Naive thymus-derived CD4-positive, alpha-beta T cell (primary cell): ENCODE measurements at regions of chr6 and their contacts with region 1.

Region 1: GRCh38 chr6:89829591-89830385 is at the start of gene CASP8AP2:
- DNase-seq: peak; percentile 71 to 98 (median 96)
- ATAC-seq: peak; percentile 97
- H3K4me3 ChIP-seq: peak within 1 kb of the TSS; percentile 96
- H3K4me3 Mint-ChIP-seq: peak within 1 kb of the TSS; percentile 92 to 100 (median 99)
- H3K27ac ChIP-seq: peak within 1 kb of the TSS; percentile 83
- H3K27ac Mint-ChIP-seq: peak within 1 kb of the TSS; percentile 84 to 97 (median 95)
- H3K4me1 ChIP-seq: peaks cover 11 to 14% of the 10 kb centered on the region in 2 donors
- H3K4me1 Mint-ChIP-seq: peaks cover 11 to 47% (median 33%) of the 10 kb centered on the region in 7 donors
- H3K27me3 ChIP-seq: no peaks in the 10 kb centered on the region
- H3K27me3 Mint-ChIP-seq: no peaks in the 10 kb centered on the region
- total RNA-seq, gene CASP8AP2: 21.2 to 44.8 (median 34.5) TPM

Region 2: DNA sequence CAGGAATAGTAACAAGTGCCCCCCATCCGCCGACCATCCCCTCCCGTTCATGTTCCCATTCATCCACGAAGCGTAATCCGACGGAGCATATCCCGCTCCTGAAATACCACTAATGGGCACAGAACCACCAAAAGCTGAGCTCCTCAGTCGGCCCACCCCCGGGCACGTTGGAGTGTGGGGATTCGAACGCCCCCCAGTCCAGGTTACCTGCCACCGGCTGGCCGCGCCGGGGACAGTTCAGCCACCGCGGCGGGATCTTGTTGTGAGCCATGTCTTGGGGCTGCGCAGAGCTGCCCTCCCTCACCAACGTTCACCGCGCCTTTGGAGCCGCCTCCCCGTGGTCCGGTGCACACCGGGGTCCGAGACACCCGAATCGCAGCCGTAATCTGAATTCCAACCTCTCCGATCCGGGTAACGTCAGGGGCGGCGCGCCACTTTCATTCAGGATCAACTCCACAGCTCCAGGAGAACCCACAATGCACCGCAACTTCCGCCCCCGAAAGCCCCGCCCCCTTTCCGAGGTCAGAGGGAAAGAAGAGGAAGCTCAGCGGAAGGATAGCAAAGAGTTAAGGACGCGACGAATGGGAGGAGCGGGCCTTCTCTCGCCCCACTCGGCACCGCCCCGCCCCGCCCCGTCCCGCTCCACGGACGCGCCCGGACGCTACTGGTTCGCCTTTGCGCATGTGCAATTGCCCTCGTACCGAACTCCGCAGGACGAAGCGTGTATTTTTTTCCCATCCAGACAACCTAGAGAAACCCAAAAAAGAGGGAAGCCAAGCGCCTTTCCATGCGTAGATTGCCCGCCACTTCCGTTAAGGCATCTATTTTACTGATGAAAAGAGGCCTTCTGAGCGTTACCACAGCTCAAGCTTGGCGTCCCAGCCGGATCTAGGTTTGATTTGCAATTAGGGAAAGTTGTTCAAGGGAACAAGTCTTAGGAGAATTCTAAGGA is 866.4 kb before region 1 on chr6 and contains the start of gene RNGTT:
- CTCF ChIA-PET with region 1: no interaction called
- POLR2A ChIA-PET with region 1: no interaction called
- intact Hi-C with region 1: loop called (anchors 1 kb)
- DNase-seq: peak; percentile 89 to 98 (median 95)
- ATAC-seq: peak; percentile 100
- H3K4me3 ChIP-seq: peak within 1 kb of the TSS; percentile 82
- H3K4me3 Mint-ChIP-seq: peak within 1 kb of the TSS; percentile 91 to 99 (median 98)
- H3K27ac ChIP-seq: peak within 1 kb of the TSS; percentile 82
- H3K27ac Mint-ChIP-seq: peak within 1 kb of the TSS; percentile 85 to 97 (median 94)
- H3K4me1 ChIP-seq: peaks cover 9 to 18% of the 10 kb centered on the region in 2 donors
- H3K4me1 Mint-ChIP-seq: peaks cover 25 to 57% (median 52%) of the 10 kb centered on the region in 7 donors
- H3K27me3 ChIP-seq: no peaks in the 10 kb centered on the region
- H3K27me3 Mint-ChIP-seq: peaks cover 0 to 2% (median 0%) of the 10 kb centered on the region in 5 donors
- total RNA-seq, gene RNGTT: 15.4 to 26.5 (median 20.8) TPM

Region 3: GRCh38 chr6:89371849-89372505 is 457.8 kb before region 1 on chr6:
- CTCF ChIA-PET with region 1: no interaction called
- POLR2A ChIA-PET with region 1: no interaction called
- intact Hi-C with region 1: loop called in 1 of 2 experiments (anchors 5 kb)
- DNase-seq: peak; percentile 55 to 79 (median 68)
- ATAC-seq: peak; percentile 85
- H3K4me3 ChIP-seq: no peak overlapping the region
- H3K4me3 Mint-ChIP-seq: peak overlapping the region in 3 of 10 donors; percentile 13 to 49 (median 29)
- H3K27ac ChIP-seq: no peak overlapping the region
- H3K27ac Mint-ChIP-seq: peak overlapping the region in 5 of 9 donors; percentile 39 to 87 (median 59)
- H3K4me1 ChIP-seq: peaks cover 6 to 8% of the 10 kb centered on the region in 2 donors
- H3K4me1 Mint-ChIP-seq: peaks cover 0 to 42% (median 9%) of the 10 kb centered on the region in 7 donors
- H3K27me3 ChIP-seq: no peaks in the 10 kb centered on the region
- H3K27me3 Mint-ChIP-seq: no peaks in the 10 kb centered on the region

Region 4: DNA sequence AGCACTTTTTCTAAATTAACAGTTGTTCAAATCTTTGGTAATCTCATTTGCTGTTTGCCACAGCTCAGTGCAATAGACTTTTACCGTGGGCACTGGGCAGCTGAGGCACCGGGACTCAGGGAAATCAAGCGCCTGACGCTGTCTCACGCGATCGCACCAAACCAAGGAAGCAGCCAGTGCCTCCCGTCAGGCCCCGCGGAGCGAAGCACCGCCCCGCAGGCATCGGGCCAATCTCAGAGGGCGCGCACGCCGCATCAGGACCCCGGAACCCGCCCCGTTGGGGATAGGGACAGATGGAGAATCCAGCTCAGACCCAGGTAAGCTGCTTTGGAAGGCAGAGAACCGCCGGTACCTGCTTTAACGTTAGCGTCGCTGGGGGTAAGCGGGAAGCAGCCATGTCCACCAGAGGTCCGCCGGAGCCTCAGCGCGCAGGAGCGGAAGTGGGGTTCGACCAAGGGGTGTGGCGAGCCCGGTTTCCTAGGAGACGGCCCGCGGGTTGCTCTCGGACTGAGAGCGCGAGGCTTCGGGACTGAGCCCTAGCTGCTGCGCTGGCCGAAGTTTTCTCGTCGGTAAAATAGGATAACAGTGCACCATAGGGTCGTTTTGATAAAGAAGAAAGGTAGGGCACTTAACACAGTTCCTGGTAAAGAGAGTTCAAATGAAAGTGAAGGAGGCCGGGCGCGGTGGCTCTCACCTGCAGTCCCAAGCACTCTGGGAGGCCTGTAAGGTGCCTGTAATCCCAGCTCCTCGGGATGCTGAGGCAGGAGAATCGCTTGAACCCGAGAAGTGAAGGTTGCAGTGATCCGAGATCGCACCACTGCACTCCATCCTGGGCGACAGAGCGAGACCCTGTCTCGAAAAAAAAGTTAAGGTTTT is 191.2 kb before region 1 on chr6 and contains the start of gene LYRM2:
- CTCF ChIA-PET with region 1: no interaction called
- POLR2A ChIA-PET with region 1: interaction called, 3 read pairs
- intact Hi-C with region 1: loop called (anchors 1 kb)
- DNase-seq: peak; percentile 85 to 93 (median 91)
- ATAC-seq: peak; percentile 97
- H3K4me3 ChIP-seq: peak within 1 kb of the TSS; percentile 99
- H3K4me3 Mint-ChIP-seq: peak within 1 kb of the TSS; percentile 90 to 98 (median 94)
- H3K27ac ChIP-seq: peak within 1 kb of the TSS; percentile 91
- H3K27ac Mint-ChIP-seq: peak within 1 kb of the TSS; percentile 96 to 99 (median 99)
- H3K4me1 ChIP-seq: peaks cover 9 to 15% of the 10 kb centered on the region in 2 donors
- H3K4me1 Mint-ChIP-seq: peaks cover 6 to 45% (median 27%) of the 10 kb centered on the region in 7 donors
- H3K27me3 ChIP-seq: no peaks in the 10 kb centered on the region
- H3K27me3 Mint-ChIP-seq: peaks cover 0 to 3% (median 0%) of the 10 kb centered on the region in 5 donors
- total RNA-seq, gene LYRM2: 18.1 to 40.7 (median 32.0) TPM

Region 5: GRCh38 chr6:89819336-89820130 is 10.3 kb before region 1 on chr6 and contains the start of gene MDN1:
- CTCF ChIA-PET with region 1: interaction called, 15 read pairs
- POLR2A ChIA-PET with region 1: interaction called, 68 read pairs
- intact Hi-C with region 1: loop called (anchors 1 kb)
- DNase-seq: peak; percentile 60 to 89 (median 87)
- ATAC-seq: peak; percentile 96
- H3K4me3 ChIP-seq: peak within 1 kb of the TSS; percentile 66
- H3K4me3 Mint-ChIP-seq: peak within 1 kb of the TSS; percentile 92 to 97 (median 96)
- H3K27ac ChIP-seq: peak within 1 kb of the TSS; percentile 75
- H3K27ac Mint-ChIP-seq: peak within 1 kb of the TSS; percentile 92 to 98 (median 96)
- H3K4me1 ChIP-seq: peaks cover 12 to 19% of the 10 kb centered on the region in 2 donors
- H3K4me1 Mint-ChIP-seq: peaks cover 16 to 49% (median 36%) of the 10 kb centered on the region in 7 donors
- H3K27me3 ChIP-seq: no peaks in the 10 kb centered on the region
- H3K27me3 Mint-ChIP-seq: no peaks in the 10 kb centered on the region
- total RNA-seq, gene MDN1: 54.9 to 66.1 (median 63.0) TPM

Region 6: GRCh38 chr6:89940225-89941027 is 110.6 kb after region 1 on chr6:
- CTCF ChIA-PET with region 1: interaction called, 5 read pairs
- POLR2A ChIA-PET with region 1: no interaction called
- intact Hi-C with region 1: loop called in 1 of 2 experiments (anchors 5 kb)
- DNase-seq: peak; percentile 22 to 80 (median 70)
- ATAC-seq: peak; percentile 90
- H3K4me3 ChIP-seq: no peak overlapping the region
- H3K4me3 Mint-ChIP-seq: peak overlapping the region in 1 of 10 donors; percentile 48
- H3K27ac ChIP-seq: peak overlapping the region; percentile 53
- H3K27ac Mint-ChIP-seq: peak overlapping the region in 8 of 9 donors; percentile 50 to 91 (median 78)
- H3K4me1 ChIP-seq: peaks cover 0 to 9% of the 10 kb centered on the region in 2 donors
- H3K4me1 Mint-ChIP-seq: peaks cover 6 to 75% (median 39%) of the 10 kb centered on the region in 7 donors
- H3K27me3 ChIP-seq: no peaks in the 10 kb centered on the region
- H3K27me3 Mint-ChIP-seq: no peaks in the 10 kb centered on the region

Region 7: DNA sequence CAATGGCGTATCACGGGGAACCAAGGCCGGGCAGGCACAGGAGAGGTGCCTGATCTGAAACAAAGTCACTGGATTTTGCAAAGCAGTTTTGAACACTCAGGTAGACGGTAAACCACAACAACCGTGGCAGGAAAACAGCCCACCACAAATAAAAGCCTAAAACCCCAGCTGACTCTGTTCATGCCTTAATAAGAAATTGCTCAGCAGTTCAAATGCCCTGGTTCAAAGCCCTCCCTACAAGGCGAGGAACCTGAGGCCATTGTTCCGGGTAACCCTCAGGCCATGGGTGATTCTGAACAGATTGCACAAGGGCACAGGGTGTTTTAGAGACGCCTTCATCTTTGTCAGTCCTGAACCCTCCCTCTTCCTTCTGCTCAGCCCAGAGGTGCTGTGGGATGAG is 643.0 kb after region 1 on chr6:
- CTCF ChIA-PET with region 1: no interaction called
- POLR2A ChIA-PET with region 1: no interaction called
- intact Hi-C with region 1: loop called in 1 of 2 experiments (anchors 5 kb)
- DNase-seq: peak in 6 of 9 donors; percentile 33 to 50 (median 37)
- ATAC-seq: peak; percentile 51
- H3K4me3 ChIP-seq: peak overlapping the region; percentile 21
- H3K4me3 Mint-ChIP-seq: peak overlapping the region; percentile 50 to 72 (median 69)
- H3K27ac ChIP-seq: no peak overlapping the region
- H3K27ac Mint-ChIP-seq: peak overlapping the region in 4 of 9 donors; percentile 28 to 90 (median 62)
- H3K4me1 ChIP-seq: peaks cover 22 to 34% of the 10 kb centered on the region in 2 donors
- H3K4me1 Mint-ChIP-seq: peaks cover 20 to 96% (median 48%) of the 10 kb centered on the region in 7 donors
- H3K27me3 ChIP-seq: no peaks in the 10 kb centered on the region
- H3K27me3 Mint-ChIP-seq: peaks cover 0 to 2% (median 0%) of the 10 kb centered on the region in 5 donors